ENCODE measurements at regions of chr11 and their contacts with region 1.

Region 1: DNA sequence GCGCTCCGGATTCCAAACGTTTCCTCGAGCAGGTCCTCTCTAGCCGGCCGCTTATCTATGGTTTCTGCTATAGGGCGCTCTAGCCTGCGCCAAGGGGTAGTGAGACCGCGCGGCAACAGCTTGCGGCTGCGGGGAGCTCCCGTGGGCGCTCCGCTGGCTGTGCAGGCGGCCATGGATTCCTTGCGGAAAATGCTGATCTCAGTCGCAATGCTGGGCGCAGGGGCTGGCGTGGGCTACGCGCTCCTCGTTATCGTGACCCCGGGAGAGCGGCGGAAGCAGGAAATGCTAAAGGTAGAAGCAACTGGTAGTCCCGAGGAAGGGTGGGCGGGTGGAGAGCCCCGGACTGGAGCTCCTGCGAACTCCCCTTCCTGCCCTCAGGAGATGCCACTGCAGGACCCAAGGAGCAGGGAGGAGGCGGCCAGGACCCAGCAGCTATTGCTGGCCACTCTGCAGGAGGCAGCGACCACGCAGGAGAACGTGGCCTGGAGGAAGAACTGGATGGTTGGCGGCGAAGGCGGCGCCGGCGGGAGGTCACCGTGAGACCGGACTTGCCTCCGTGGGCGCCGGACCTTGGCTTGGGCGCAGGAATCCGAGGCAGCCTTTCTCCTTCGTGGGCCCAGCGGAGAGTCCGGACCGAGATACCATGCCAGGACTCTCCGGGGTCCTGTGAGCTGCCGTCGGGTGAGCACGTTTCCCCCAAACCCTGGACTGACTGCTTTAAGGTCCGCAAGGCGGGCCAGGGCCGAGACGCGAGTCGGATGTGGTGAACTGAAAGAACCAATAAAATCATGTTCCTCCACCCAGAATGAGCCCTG is at the starts of genes LBHD1 and UQCC3:
- DNase-seq: peak; percentile 87
- ATAC-seq: peak; percentile 69
- H3K4me3 Mint-ChIP-seq: peak within 1 kb of the TSS; percentile 98
- H3K27ac Mint-ChIP-seq: peak within 1 kb of the TSS; percentile 98
- H3K4me1 Mint-ChIP-seq: peaks cover 24% of the 10 kb centered on the region
- H3K27me3 Mint-ChIP-seq: no peaks in the 10 kb centered on the region
- CTCF ChIP-seq: no peak
- total RNA-seq, gene LBHD1: 4.2 to 6.3 TPM (median 5.1 TPM) in 3 replicates
- total RNA-seq, gene UQCC3: 17.7 to 18.7 TPM (median 18.1 TPM) in 3 replicates

Region 2: GRCh38 chr11:62612366-62613290 is 59.2 kb before region 1 on chr11 and contains the starts of genes EML3 and ROM1:
- CTCF ChIA-PET with region 1: interaction called, 13 read pairs
- POLR2A ChIA-PET with region 1: no interaction called
- DNase-seq: peak; percentile 97
- ATAC-seq: peak; percentile 89
- H3K4me3 Mint-ChIP-seq: peak within 1 kb of the TSS; percentile 95
- H3K27ac Mint-ChIP-seq: peak within 1 kb of the TSS; percentile 41; the same call in 1 of the 2 replicates
- H3K4me1 Mint-ChIP-seq: peaks cover 28% of the 10 kb centered on the region
- H3K27me3 Mint-ChIP-seq: peaks cover 9% of the 10 kb centered on the region; the same call in 1 of the 2 replicates
- CTCF ChIP-seq: peak; percentile 93
- total RNA-seq, gene EML3: 45.5 to 54.7 TPM (median 51.1 TPM) in 3 replicates
- total RNA-seq, gene ROM1: 0.78 to 1.6 TPM (median 0.94 TPM) in 3 replicates

Region 3: DNA sequence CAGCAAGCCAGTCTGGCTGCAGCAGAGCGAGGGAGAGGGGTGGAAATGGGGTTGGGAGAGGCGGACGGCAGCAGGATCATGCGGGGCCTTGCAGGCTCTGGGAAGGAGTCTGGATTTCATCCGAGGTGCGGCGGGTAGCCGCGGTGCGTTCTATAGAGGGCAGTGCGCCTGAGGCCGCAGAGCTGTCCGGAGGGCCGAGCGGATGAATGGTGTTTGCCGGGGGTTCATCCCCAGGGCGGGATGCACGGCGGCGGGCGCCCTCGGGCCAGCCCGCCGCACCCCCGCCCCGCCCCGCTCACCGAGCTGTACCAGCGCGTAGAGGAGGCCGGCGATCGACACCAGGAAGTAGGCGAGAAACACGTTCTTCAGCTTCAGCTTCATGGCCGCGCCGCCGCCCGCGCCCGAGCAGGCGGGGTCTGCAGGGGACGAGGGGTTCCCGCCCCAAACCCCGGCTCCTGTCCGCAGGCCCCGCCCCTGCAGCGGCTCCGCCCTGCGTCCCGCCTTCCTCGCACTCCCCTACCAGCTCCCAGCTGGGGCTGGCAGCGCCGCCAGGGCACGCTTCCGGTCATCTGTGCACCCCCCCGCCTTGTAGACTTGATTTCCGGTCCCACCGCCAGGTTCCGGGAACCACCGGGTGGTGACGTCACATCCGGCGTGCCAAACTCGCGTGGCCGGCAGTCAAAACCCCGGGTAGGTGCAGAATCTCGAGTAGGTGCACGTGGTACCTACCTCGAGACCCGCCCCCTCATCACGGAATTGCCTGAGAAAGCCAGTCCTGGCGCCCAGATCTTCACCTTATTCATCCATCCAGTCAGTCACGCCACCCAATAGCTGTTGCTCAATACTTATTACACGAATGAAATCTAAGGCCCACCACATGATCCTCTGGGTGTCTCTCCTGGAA is 50.0 kb before region 1 on chr11 and contains the start of gene B3GAT3:
- CTCF ChIA-PET with region 1: no interaction called
- POLR2A ChIA-PET with region 1: interaction called, 12 read pairs
- DNase-seq: peak; percentile 99
- ATAC-seq: peak; percentile 97
- H3K4me3 Mint-ChIP-seq: peak within 1 kb of the TSS; percentile 97
- H3K27ac Mint-ChIP-seq: peak within 1 kb of the TSS; percentile 93
- H3K4me1 Mint-ChIP-seq: peaks cover 16% of the 10 kb centered on the region
- H3K27me3 Mint-ChIP-seq: no peaks in the 10 kb centered on the region
- CTCF ChIP-seq: no peak
- total RNA-seq, gene B3GAT3: 41.2 to 43.9 TPM (median 43.3 TPM) in 3 replicates

Region 4: GRCh38 chr11:62645956-62646824 is 25.6 kb before region 1 on chr11 and contains the start of gene GANAB:
- CTCF ChIA-PET with region 1: no interaction called
- POLR2A ChIA-PET with region 1: interaction called, 13 read pairs
- DNase-seq: peak; percentile 99
- ATAC-seq: peak; percentile 98
- H3K4me3 Mint-ChIP-seq: peak within 1 kb of the TSS; percentile 99
- H3K27ac Mint-ChIP-seq: peak within 1 kb of the TSS; percentile 96
- H3K4me1 Mint-ChIP-seq: peaks cover 10% of the 10 kb centered on the region
- H3K27me3 Mint-ChIP-seq: no peaks in the 10 kb centered on the region
- CTCF ChIP-seq: no peak
- total RNA-seq, gene GANAB: 323 to 350 TPM (median 327 TPM) in 3 replicates

Region 5: DNA sequence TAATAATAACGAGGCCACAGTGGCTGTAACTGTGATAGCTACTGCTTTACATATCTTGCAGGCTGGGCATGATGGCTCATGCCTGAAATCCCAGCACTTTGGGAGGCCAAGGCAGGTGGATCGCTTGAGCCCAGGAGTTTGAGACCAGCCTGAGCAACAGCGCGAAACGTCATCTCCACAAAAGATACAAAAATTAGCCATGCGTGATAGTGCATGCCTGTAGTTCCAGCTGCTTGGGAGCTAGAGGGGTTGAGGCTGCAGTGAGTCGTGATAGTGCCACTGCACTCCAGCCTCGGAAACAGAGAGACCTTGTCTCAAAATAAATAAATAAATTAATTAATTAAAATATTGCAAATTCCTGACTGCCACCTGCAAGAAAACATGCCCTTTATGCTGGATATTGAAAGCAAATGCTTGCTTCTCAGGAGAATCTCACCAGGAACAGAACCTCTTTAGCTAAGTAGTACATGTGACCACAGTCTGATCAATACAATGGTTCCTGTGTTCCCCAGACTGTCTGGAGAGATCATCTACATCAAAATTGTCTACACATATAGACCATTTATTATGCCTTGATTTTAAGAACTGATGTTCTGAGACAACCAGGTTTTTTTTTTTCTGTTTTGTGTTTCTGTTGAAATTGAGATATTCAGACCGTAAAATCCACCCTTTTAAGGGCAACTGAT is 75.8 kb after region 1 on chr11:
- CTCF ChIA-PET with region 1: no interaction called
- POLR2A ChIA-PET with region 1: no interaction called
- DNase-seq: no peak
- ATAC-seq: no peak
- H3K4me3 Mint-ChIP-seq: no peak overlapping the region
- H3K27ac Mint-ChIP-seq: peak overlapping the region; percentile 80
- H3K4me1 Mint-ChIP-seq: peaks cover 6% of the 10 kb centered on the region
- H3K27me3 Mint-ChIP-seq: no peaks in the 10 kb centered on the region
- CTCF ChIP-seq: no peak

Region 6: DNA sequence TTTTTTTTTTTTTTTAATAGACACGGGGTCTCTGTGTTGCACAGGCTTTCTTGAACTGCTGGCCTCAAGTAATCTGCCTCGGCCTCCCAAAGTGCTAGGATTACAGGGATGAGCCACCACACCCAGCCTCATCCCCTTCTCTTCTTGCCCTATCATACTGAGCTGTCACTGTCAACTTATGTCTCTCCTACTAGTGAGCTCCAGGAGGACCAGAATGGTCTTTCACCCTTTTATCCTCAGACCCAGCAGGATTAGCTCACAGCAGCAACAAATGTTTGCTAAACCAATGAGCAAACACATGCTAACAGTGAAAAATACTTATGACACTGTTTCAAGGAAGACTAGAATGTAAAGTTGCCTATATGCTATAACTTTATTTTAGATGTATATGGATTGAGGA is 139.9 kb after region 1 on chr11:
- CTCF ChIA-PET with region 1: no interaction called
- POLR2A ChIA-PET with region 1: no interaction called
- DNase-seq: no peak
- ATAC-seq: no peak
- H3K4me3 Mint-ChIP-seq: no peak overlapping the region
- H3K27ac Mint-ChIP-seq: no peak overlapping the region
- H3K4me1 Mint-ChIP-seq: peaks cover 4% of the 10 kb centered on the region
- H3K27me3 Mint-ChIP-seq: no peaks in the 10 kb centered on the region
- CTCF ChIP-seq: no peak